H1 (cell line): ENCODE measurements at regions of chr12 and their contacts with region 1.

Region 1: GRCh38 chr12:70831538-70831937 is 89.0 kb downstream of the PTPRR start:
- DNase-seq: no peak
- H3K4me3 ChIP-seq: no peak overlapping the region
- H3K27ac ChIP-seq: no peak overlapping the region
- H3K4me1 ChIP-seq: no peaks in the 10 kb centered on the region
- H3K27me3 ChIP-seq: no peaks in the 10 kb centered on the region
- CTCF ChIP-seq: no peak
- EP300 ChIP-seq: no peak
- POLR2A ChIP-seq: no peak
- RAD21 ChIP-seq: no peak

Region 2: GRCh38 chr12:70806043-70806442 is 25.5 kb before region 1 on chr12:
- CTCF ChIA-PET with region 1: no interaction called
- POLR2A ChIA-PET with region 1: no interaction called
- DNase-seq: no peak
- H3K4me3 ChIP-seq: no peak overlapping the region
- H3K27ac ChIP-seq: no peak overlapping the region
- H3K4me1 ChIP-seq: peaks cover 0 to 11% (median 2%) of the 10 kb centered on the region in 4 experiments; a peak in 3 of 7 replicates
- H3K27me3 ChIP-seq: no peaks in the 10 kb centered on the region
- CTCF ChIP-seq: no peak
- EP300 ChIP-seq: no peak
- POLR2A ChIP-seq: no peak
- RAD21 ChIP-seq: no peak

Region 3: GRCh38 chr12:70849265-70849960 is 17.9 kb after region 1 on chr12:
- CTCF ChIA-PET with region 1: interaction called, 17 read pairs
- POLR2A ChIA-PET with region 1: no interaction called
- DNase-seq: no peak
- H3K4me3 ChIP-seq: no peak overlapping the region
- H3K27ac ChIP-seq: no peak overlapping the region
- H3K4me1 ChIP-seq: no peaks in the 10 kb centered on the region; a peak in 1 of 7 replicates
- H3K27me3 ChIP-seq: no peaks in the 10 kb centered on the region
- CTCF ChIP-seq: peak in 2 of 3 experiments; percentile 29 to 46; a peak in 2 of 4 replicates
- EP300 ChIP-seq: no peak
- POLR2A ChIP-seq: no peak
- RAD21 ChIP-seq: peak; percentile 58 to 62

Region 4: GRCh38 chr12:71186571-71187288 is 355.2 kb after region 1 on chr12:
- CTCF ChIA-PET with region 1: no interaction called
- POLR2A ChIA-PET with region 1: no interaction called
- DNase-seq: no peak
- H3K4me3 ChIP-seq: no peak overlapping the region
- H3K27ac ChIP-seq: no peak overlapping the region; the same call in 1 of the 2 replicates
- H3K4me1 ChIP-seq: peaks cover 0 to 3% (median 0%) of the 10 kb centered on the region in 4 experiments; a peak in 3 of 7 replicates
- H3K27me3 ChIP-seq: peaks cover 0 to 1% (median 0%) of the 10 kb centered on the region in 4 experiments; a peak in 1 of 7 replicates
- CTCF ChIP-seq: no peak
- EP300 ChIP-seq: no peak
- POLR2A ChIP-seq: no peak
- RAD21 ChIP-seq: no peak